MCF 10A (cell line): ENCODE measurements at regions of chr11 and their contacts with region 1.

Region 1: DNA sequence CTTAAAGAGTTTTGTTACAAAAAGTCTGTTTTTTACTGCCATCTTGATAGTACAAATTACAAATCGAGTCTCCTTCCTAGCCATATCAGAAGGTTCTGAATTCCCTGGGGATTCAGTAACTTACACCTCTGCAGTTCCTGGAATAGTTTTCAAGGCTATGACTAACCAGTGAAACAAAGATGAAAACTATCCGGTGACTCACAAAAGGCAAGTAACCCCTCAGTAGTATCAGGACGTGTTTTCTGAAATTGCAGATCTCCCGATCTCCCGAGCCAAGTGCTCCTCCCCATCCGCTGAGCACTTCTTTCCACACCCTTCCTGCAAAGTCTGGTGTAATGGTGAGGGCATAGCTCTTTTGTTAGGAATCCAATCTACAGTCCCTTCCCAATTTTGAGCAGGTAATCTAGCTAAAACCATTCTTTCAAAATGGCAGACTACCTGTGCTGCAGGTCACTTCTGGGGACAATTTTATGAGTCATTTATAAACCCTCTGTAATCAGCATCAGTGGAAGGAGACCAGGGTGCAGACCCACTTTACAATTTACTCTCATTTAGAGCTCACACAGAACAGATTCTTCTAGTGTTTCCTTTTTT is 7.7 kb downstream of the E2F8 start:
- DNase-seq: peak; percentile 91
- H3K4me3 Mint-ChIP-seq: peak overlapping the region; percentile 32
- H3K27ac Mint-ChIP-seq: peak overlapping the region; percentile 8
- H3K4me1 Mint-ChIP-seq: peaks cover 8% of the 10 kb centered on the region
- H3K27me3 Mint-ChIP-seq: no peaks in the 10 kb centered on the region
- CTCF ChIP-seq: no peak

Region 2: GRCh38 chr11:19276859-19277808 is 44.1 kb after region 1 on chr11:
- CTCF ChIA-PET with region 1: no interaction called
- POLR2A ChIA-PET with region 1: no interaction called
- intact Hi-C with region 1: loop called (anchors 2 kb)
- DNase-seq: peak; percentile 95
- H3K4me3 Mint-ChIP-seq: no peak overlapping the region
- H3K27ac Mint-ChIP-seq: peak overlapping the region; percentile 74
- H3K4me1 Mint-ChIP-seq: peaks cover 27% of the 10 kb centered on the region
- H3K27me3 Mint-ChIP-seq: no peaks in the 10 kb centered on the region
- CTCF ChIP-seq: no peak